ENCODE measurements at regions of chr6 and their contacts with region 1.

Region 1: DNA sequence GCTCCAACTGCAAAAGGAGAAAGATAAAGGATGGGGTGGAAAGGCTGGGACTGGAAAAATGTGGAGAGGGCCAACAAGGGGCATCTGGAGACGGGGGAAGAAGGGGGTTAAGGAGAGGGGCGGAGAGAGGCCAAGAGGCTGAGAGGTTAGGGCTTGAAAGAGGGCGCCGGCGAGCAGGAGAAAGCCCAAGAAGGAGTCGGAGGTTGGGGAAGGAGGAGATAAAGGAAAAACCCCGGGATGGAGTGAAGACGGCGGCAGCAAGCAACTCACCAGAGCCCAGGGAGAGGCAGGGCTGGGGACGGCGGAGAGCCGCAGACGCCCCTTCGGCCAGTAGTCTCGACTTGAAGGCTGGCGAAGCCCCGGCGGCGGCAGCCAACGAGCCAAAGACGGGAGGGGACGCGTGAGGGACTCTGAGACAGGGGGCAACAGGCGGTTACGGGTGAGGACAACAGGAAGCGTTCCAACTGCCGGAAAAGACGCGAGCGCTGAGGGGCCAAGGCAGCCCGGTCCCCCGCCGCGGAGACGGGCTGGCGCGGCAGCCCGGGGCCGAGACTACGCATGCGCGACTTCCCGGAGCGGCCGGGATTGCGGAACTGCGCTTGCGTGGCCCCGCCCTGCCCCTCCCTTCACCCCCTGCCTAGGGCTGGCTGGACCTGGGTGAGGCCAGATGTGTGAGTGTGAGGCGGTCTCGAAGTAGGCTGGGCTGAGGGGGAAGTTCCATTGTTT is at the start of gene STK38:
- DNase-seq: peak; percentile 94 to 97 (median 95)
- ATAC-seq: peak; percentile 93 to 99 (median 96)
- H3K4me3 ChIP-seq: peak within 1 kb of the TSS; percentile 82 to 100 (median 94)
- H3K27ac ChIP-seq: peak within 1 kb of the TSS; percentile 96 to 100 (median 98)
- H3K4me1 ChIP-seq: peaks cover 0 to 54% (median 34%) of the 10 kb centered on the region in 12 donors
- H3K27me3 ChIP-seq: no peaks in the 10 kb centered on the region
- CTCF ChIP-seq: peak in 4 of 12 donors; percentile 7 to 35 (median 22)
- POLR2A ChIP-seq: peak; percentile 96 to 98
- total RNA-seq, gene STK38: 14.3 to 32.8 (median 21.2) TPM

Region 2: GRCh38 chr6:36442671-36443470 is 104.2 kb before region 1 on chr6 and contains the starts of genes KCTD20 and PXT1:
- intact Hi-C with region 1: loop called in 8 of 10 experiments (anchors 2 to 10 kb)
- DNase-seq: peak; percentile 90 to 95 (median 93)
- ATAC-seq: peak; percentile 87 to 94 (median 91)
- H3K4me3 ChIP-seq: peak within 1 kb of the TSS; percentile 78 to 99 (median 89)
- H3K27ac ChIP-seq: peak within 1 kb of the TSS; percentile 85 to 100 (median 98)
- H3K4me1 ChIP-seq: peaks cover 8 to 48% (median 34%) of the 10 kb centered on the region in 12 donors
- H3K27me3 ChIP-seq: no peaks in the 10 kb centered on the region
- CTCF ChIP-seq: no peak
- POLR2A ChIP-seq: peak in 1 of 2 donors; percentile 70
- total RNA-seq, gene KCTD20: 25.0 to 43.9 (median 29.0) TPM
- total RNA-seq, gene PXT1: 0.21 to 0.59 (median 0.40) TPM in 4 of 9 donors, not detected in the others

Region 3: DNA sequence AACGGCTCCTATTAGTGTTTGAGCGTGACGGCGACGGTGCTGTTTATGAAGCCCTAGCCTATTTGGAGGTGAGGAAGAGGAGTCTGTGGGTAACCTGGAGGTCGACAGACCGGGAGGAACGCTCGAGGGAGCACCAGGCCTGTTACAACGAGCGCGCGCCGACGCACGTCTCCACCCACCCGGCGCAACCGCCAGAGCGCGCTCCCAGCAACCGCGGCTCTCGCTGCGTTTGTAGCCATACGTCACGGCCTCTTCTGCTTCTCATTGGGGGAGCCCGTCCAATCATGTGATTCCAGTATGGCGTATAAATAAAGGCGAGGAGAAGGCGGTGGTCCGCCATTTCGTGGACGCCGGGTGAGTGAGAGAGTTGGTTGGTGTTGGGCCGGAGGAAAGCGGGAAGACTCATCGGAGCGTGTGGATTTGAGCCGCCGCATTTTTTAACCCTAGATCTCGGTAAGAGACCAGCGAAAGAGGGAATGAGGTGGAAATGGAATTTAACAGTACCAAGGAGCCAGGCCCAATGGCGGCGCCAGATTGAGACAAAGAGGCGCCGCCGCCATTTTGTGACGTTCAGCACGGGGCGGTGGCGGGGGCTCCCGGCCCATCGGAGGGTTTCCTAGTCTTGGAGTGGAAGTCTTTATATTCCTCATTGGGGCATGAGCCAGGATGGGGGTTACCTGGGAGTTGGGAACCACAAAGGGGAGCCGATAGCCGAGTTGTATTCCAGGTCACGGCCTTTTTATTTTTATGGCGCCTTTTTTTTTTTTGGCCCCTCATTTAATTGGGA is 47.1 kb after region 1 on chr6 and contains the start of gene SRSF3:
- intact Hi-C with region 1: loop called (anchors 1 to 5 kb)
- DNase-seq: peak; percentile 97 to 98 (median 98)
- ATAC-seq: peak; percentile 96 to 99 (median 97)
- H3K4me3 ChIP-seq: peak within 1 kb of the TSS; percentile 64 to 83 (median 74)
- H3K27ac ChIP-seq: peak within 1 kb of the TSS; percentile 87 to 100 (median 97)
- H3K4me1 ChIP-seq: peaks cover 4 to 41% (median 30%) of the 10 kb centered on the region in 12 donors
- H3K27me3 ChIP-seq: no peaks in the 10 kb centered on the region
- CTCF ChIP-seq: peak; percentile 43 to 85 (median 55)
- POLR2A ChIP-seq: peak in 1 of 2 donors; percentile 95
- total RNA-seq, gene SRSF3: 43.2 to 162 (median 111) TPM

Measured in heart left ventricle (tissue), 16 donors.